Transverse colon (tissue), 4 donors: ENCODE measurements at regions of chr3 and their contacts with region 1.

Region 1: GRCh38 chr3:120894303-120894702 is 13.7 kb upstream of the STXBP5L start:
- DNase-seq: no peak
- H3K4me3 ChIP-seq: no peak overlapping the region
- H3K27ac ChIP-seq: no peak overlapping the region
- H3K4me1 ChIP-seq: peaks cover 0 to 11% (median 0%) of the 10 kb centered on the region in 4 donors
- H3K27me3 ChIP-seq: no peaks in the 10 kb centered on the region
- CTCF ChIP-seq: no peak
- EP300 ChIP-seq: no peak
- POLR2A ChIP-seq: no peak

Region 2: DNA sequence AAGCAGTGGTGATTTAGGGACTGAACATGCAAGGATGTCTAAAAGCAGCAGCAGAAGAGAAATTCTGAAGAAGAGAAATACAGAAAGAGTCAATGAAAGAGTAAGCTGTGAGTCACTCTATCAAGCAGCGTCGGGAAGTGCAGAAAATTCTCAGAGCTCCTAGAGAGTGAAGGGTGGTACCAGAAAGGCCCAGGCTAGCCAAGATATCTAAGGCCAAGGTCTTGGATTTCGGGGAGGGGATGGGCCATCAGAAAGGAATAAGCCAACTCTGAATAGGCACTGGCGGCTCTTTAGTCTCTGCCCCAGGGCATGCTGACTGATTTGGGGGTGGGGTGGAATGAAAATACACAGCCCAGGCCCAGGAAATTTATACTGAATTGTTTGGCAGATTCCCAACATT is 680.1 kb before region 1 on chr3:
- in situ Hi-C with region 1: no loop called
- intact Hi-C with region 1: no loop called
- DNase-seq: no peak
- H3K4me3 ChIP-seq: no peak overlapping the region
- H3K27ac ChIP-seq: no peak overlapping the region
- H3K4me1 ChIP-seq: no peaks in the 10 kb centered on the region
- H3K27me3 ChIP-seq: no peaks in the 10 kb centered on the region
- CTCF ChIP-seq: no peak
- EP300 ChIP-seq: no peak
- POLR2A ChIP-seq: no peak

Region 3: DNA sequence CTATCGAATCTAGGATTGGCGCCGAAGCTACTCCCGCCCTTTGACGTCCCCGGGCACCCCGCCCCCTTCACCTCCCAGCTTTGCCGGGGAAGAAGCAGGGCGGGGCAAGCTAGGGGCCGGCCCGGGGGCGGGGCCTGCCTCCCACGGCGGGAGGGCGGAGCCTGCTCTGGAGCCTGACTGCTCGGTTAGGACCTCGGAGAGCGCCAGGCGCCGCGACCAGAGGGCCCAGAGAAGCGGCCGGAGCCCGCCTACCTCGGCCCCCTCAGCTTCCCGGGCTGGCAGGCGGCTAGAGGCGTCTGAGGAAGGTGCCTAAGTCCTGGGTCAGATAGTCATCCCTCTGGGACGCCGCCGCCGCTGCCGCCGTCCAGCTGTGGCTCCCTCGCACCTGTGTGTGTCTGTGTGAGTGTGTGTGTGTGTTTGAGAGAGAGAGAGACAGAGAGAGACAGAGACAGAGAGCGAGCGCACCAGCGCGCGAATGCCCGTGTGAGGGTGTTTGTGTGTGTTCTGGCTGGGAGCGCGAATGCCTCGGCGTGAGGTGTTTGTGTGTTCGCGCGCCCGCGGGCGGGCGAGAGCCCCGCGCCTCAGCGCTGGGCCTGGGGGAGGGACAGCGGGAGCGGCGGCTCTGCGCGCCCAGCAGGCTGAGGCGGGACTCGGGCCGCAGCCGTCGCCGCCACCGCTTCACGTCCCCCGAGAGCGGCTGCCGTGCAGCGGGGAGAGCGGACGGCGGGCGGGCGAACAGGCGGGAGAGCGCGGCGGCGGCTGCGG is 13.9 kb after region 1 on chr3 and contains the start of gene STXBP5L:
- in situ Hi-C with region 1: no loop called
- intact Hi-C with region 1: loop called (anchors 2 kb)
- DNase-seq: peak; percentile 89
- H3K4me3 ChIP-seq: peak within 1 kb of the TSS; percentile 34 to 68 (median 42)
- H3K27ac ChIP-seq: peak within 1 kb of the TSS; percentile 8 to 50 (median 49)
- H3K4me1 ChIP-seq: peaks cover 0 to 24% (median 7%) of the 10 kb centered on the region in 4 donors
- H3K27me3 ChIP-seq: peaks cover 63% of the 10 kb centered on the region
- CTCF ChIP-seq: no peak
- EP300 ChIP-seq: no peak
- POLR2A ChIP-seq: no peak
- total RNA-seq, gene STXBP5L: 0.40 to 9.4 (median 1.3) TPM